HCT116 (cell line): ENCODE measurements at regions of chr3 and their contacts with region 1.

Region 1: GRCh38 chr3:38117748-38118420 is 19.0 kb downstream of the ACAA1 start:
- DNase-seq: peak; percentile 40
- ATAC-seq: peak; percentile 89
- H3K4me3 ChIP-seq: no peak overlapping the region
- H3K27ac ChIP-seq: no peak overlapping the region
- H3K4me1 ChIP-seq: peaks cover 5 to 11% of the 10 kb centered on the region in 2 experiments; a peak in 3 of 4 replicates
- H3K27me3 ChIP-seq: no peaks in the 10 kb centered on the region
- CTCF ChIP-seq: peak; percentile 86 to 88 (median 86)
- POLR2A ChIP-seq: no peak
- RAD21 ChIP-seq: peak; percentile 94

Region 2: GRCh38 chr3:37974121-37975083 is 143.5 kb before region 1 on chr3:
- CTCF ChIA-PET with region 1: interaction called, 3 read pairs
- POLR2A ChIA-PET with region 1: no interaction called
- RAD21 ChIA-PET with region 1: no interaction called
- intact Hi-C with region 1: loop called (anchors 10 kb)
- DNase-seq: peak; percentile 43
- ATAC-seq: peak; percentile 98
- H3K4me3 ChIP-seq: no peak overlapping the region
- H3K27ac ChIP-seq: no peak overlapping the region
- H3K4me1 ChIP-seq: no peaks in the 10 kb centered on the region
- H3K27me3 ChIP-seq: no peaks in the 10 kb centered on the region
- CTCF ChIP-seq: peak; percentile 85 to 94 (median 88)
- POLR2A ChIP-seq: no peak
- RAD21 ChIP-seq: peak; percentile 86

Region 3: GRCh38 chr3:38095669-38096483 is 22.0 kb before region 1 on chr3:
- CTCF ChIA-PET with region 1: no interaction called
- POLR2A ChIA-PET with region 1: no interaction called
- RAD21 ChIA-PET with region 1: no interaction called
- intact Hi-C with region 1: no loop called
- DNase-seq: no peak
- ATAC-seq: no peak
- H3K4me3 ChIP-seq: no peak overlapping the region
- H3K27ac ChIP-seq: no peak overlapping the region
- H3K4me1 ChIP-seq: no peaks in the 10 kb centered on the region
- H3K27me3 ChIP-seq: peaks cover 5% of the 10 kb centered on the region; the same call in 1 of the 2 replicates
- CTCF ChIP-seq: no peak
- POLR2A ChIP-seq: no peak
- RAD21 ChIP-seq: no peak

Region 4: DNA sequence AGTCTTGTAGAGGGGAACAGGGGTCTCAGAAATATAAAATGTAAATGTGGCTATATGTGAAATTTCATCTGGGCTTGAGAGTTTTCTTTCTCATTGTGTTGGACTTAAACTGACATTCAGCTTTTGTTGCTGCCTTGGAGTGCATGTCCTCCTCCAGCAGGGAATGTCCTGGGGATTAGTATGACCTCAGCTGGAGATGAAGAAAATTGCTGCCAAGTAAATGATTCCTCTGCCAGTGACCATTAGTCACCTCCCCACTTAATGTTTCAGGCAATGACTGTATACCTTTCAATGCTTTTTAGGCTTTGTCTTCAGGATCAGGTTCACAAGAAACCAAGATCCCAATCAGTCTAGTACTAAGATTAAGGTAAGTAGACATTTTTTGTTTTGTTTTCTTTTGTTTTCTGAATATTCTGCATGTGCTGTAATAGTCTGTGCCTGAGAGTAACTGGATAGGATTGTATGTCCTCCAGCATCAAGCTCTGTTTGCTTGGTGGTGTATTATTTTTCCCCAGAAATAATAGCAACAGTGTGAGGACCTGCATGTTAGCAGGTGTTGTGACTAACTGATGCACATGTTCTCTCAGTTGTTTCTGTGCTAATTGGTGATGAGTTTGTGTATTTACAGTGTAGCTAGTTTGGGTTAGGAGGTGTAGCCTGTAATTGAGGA is 129.6 kb after region 1 on chr3:
- CTCF ChIA-PET with region 1: no interaction called
- POLR2A ChIA-PET with region 1: no interaction called
- RAD21 ChIA-PET with region 1: no interaction called
- intact Hi-C with region 1: loop called (anchors 1 kb)
- DNase-seq: peak; percentile 13
- ATAC-seq: peak; percentile 82
- H3K4me3 ChIP-seq: no peak overlapping the region
- H3K27ac ChIP-seq: no peak overlapping the region
- H3K4me1 ChIP-seq: no peaks in the 10 kb centered on the region; a peak in 1 of 4 replicates
- H3K27me3 ChIP-seq: no peaks in the 10 kb centered on the region
- CTCF ChIP-seq: peak in 1 of 3 experiments; percentile 29; a peak in 1 of 6 replicates
- POLR2A ChIP-seq: no peak
- RAD21 ChIP-seq: peak; percentile 56

Region 5: DNA sequence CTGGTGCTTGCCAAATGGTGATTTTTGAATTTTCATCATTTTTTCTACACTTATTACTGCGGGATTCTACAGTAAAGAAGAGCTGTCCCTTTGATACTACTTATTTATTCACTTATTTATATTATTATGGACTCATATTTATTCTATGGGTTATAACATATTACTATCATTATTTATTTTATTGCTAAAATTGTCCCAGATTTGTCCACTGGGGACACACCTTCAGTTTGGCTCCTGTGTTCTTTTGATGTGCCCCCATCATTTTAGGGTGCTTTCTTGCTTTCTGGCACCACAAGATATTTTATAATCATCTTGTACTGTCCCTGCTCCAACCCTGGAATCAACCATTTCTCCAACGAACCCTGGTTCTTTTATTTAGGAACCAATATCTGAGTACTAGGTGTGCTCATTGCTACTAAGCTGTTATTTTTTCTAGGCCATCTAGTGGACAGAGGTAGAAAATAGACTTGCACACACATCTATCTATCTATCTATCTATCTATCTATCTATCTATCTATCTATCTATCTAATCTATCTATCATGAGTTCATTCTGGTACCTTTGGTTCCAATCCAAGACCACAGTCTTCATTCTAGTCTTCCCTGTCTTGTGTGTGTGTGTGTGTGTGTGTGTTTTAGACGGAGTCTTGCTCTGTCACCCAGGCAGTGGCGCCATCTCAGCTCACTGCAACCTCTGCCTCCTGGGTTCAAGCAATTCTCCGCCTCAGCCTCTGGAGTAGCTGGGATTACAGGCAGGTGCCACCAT is 180.2 kb after region 1 on chr3:
- CTCF ChIA-PET with region 1: no interaction called
- POLR2A ChIA-PET with region 1: no interaction called
- RAD21 ChIA-PET with region 1: no interaction called
- intact Hi-C with region 1: loop called (anchors 1 kb)
- DNase-seq: peak; percentile 15
- ATAC-seq: peak; percentile 97
- H3K4me3 ChIP-seq: no peak overlapping the region
- H3K27ac ChIP-seq: no peak overlapping the region
- H3K4me1 ChIP-seq: no peaks in the 10 kb centered on the region
- H3K27me3 ChIP-seq: no peaks in the 10 kb centered on the region
- CTCF ChIP-seq: peak; percentile 63 to 89 (median 82)
- POLR2A ChIP-seq: no peak
- RAD21 ChIP-seq: peak; percentile 45

Region 6: DNA sequence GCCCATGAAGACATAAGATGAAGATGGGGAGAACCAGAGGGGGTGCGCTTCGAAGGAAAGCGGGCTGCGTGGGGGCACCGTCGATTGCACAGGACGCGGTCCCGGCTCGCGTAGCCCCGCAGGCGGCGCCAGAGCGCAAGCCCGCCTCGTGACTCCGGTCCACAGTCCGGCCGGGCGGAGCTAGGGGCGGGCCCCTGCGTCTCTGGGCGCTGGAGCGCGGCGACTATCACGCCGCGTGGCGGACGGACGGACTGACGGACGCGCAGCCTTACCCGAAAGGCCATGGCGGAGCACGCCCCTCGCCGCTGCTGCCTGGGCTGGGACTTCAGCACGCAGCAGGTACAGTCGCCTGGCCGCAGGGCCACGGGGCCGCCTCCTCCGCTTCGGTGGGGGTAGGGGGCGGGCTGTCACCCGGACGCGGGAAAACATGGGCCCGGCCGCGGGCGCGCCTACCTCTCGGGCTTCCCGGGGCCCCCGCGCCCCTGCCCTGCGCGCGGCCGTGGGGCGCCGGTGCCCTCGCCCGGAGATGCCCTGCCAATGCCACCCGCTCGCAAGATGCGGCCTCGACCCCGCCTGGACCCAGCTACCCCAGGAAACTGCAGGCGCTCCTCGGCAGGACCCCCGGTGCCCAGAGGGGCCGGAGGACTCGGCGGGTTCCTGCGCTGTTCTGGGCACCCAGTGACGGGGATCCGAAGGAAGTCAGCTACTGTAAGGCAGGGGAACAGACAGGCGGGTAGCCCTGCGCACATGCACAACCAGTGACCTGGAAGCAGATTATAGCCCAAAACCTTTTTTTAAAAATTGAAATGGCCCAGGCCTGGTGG is 228.9 kb after region 1 on chr3 and contains the start of gene XYLB:
- CTCF ChIA-PET with region 1: interaction called, 5 read pairs
- POLR2A ChIA-PET with region 1: no interaction called
- RAD21 ChIA-PET with region 1: no interaction called
- intact Hi-C with region 1: loop called (anchors 5 kb)
- DNase-seq: peak; percentile 63
- ATAC-seq: peak; percentile 94
- H3K4me3 ChIP-seq: peak within 1 kb of the TSS; percentile 77 to 87
- H3K27ac ChIP-seq: peak within 1 kb of the TSS; percentile 64
- H3K4me1 ChIP-seq: peaks cover 0 to 34% of the 10 kb centered on the region in 2 experiments; a peak in 2 of 4 replicates
- H3K27me3 ChIP-seq: no peaks in the 10 kb centered on the region
- CTCF ChIP-seq: peak; percentile 68 to 81 (median 76)
- POLR2A ChIP-seq: peak; percentile 29
- RAD21 ChIP-seq: peak; percentile 74
- total RNA-seq, gene XYLB: 14.0 TPM

Region 7: GRCh38 chr3:38479431-38480092 is 361.7 kb after region 1 on chr3:
- CTCF ChIA-PET with region 1: interaction called, 7 read pairs
- POLR2A ChIA-PET with region 1: no interaction called
- RAD21 ChIA-PET with region 1: no interaction called
- intact Hi-C with region 1: loop called (anchors 5 kb)
- DNase-seq: no peak
- ATAC-seq: peak; percentile 92
- H3K4me3 ChIP-seq: no peak overlapping the region
- H3K27ac ChIP-seq: no peak overlapping the region
- H3K4me1 ChIP-seq: no peaks in the 10 kb centered on the region
- H3K27me3 ChIP-seq: no peaks in the 10 kb centered on the region
- CTCF ChIP-seq: peak; percentile 83 to 88 (median 88)
- POLR2A ChIP-seq: no peak
- RAD21 ChIP-seq: peak; percentile 97

Region 8: GRCh38 chr3:38843898-38844297 is 726.0 kb after region 1 on chr3:
- CTCF ChIA-PET with region 1: no interaction called
- POLR2A ChIA-PET with region 1: no interaction called
- RAD21 ChIA-PET with region 1: no interaction called
- intact Hi-C with region 1: loop called (anchors 5 kb)
- DNase-seq: peak; percentile 60
- ATAC-seq: peak; percentile 97
- H3K4me3 ChIP-seq: no peak overlapping the region
- H3K27ac ChIP-seq: no peak overlapping the region
- H3K4me1 ChIP-seq: no peaks in the 10 kb centered on the region
- H3K27me3 ChIP-seq: peaks cover 21% of the 10 kb centered on the region
- CTCF ChIP-seq: peak; percentile 47 to 74 (median 62)
- POLR2A ChIP-seq: no peak
- RAD21 ChIP-seq: peak; percentile 83